Activated naive CD4-positive, alpha-beta T cell treated with anti-CD3 and anti-CD28 coated beads for 36 hours (primary cell): ENCODE measurements at regions of chr14 and their contacts with region 1.

Region 1: DNA sequence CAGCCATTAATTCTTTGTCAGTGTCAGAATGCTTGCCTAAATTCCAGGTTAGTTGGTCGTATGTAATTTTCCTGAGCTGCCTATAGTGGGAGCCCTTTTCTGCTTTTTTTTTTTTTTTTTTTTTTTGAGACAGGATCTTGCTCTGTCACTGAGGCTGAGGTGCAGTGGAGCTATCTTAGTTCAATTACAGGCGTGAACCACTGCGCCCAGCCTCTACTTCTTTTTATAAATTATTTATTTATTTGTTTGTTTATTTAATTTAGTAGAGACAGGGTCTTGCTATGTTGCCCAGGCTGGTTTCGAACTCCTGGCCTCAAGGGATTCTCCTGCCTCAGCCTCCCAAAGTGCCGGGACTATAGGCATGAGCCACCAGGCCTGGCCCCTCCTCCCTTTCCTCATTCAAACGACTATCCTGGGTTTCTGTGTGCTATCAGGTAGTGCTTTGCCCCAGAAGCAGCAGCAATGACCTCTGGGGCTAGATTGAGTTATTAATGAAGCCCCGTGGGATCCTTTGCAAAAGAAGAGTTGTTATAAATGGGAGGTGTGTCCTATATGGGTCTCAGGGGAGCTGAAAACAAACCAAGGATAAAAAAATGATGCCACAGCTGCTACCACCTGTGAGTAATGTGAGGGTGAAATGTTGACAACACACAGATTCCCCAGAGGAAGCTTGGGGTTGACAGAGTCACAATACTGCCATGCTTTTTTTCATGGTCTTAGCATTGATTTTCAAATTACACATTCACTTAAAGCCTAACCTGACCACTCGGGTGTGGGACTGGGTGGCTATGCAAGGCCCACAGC is 34.6 kb upstream of the NFKBIA start:
- DNase-seq: no peak
- H3K4me3 Mint-ChIP-seq: no peak overlapping the region
- H3K27ac Mint-ChIP-seq: no peak overlapping the region
- H3K4me1 Mint-ChIP-seq: peaks cover 9% of the 10 kb centered on the region
- H3K27me3 Mint-ChIP-seq: no peaks in the 10 kb centered on the region

Region 2: GRCh38 chr14:35533357-35534207 is 94.5 kb after region 1 on chr14 and contains the start of gene INSM2:
- CTCF ChIA-PET with region 1: no interaction called
- intact Hi-C with region 1: loop called (anchors 2 kb)
- DNase-seq: peak; percentile 61
- H3K4me3 Mint-ChIP-seq: peak within 1 kb of the TSS; percentile 73
- H3K27ac Mint-ChIP-seq: no peak within 1 kb of the TSS
- H3K4me1 Mint-ChIP-seq: peaks cover 10% of the 10 kb centered on the region
- H3K27me3 Mint-ChIP-seq: peaks cover 61% of the 10 kb centered on the region
- total RNA-seq, gene INSM2: not detected

Region 3: DNA sequence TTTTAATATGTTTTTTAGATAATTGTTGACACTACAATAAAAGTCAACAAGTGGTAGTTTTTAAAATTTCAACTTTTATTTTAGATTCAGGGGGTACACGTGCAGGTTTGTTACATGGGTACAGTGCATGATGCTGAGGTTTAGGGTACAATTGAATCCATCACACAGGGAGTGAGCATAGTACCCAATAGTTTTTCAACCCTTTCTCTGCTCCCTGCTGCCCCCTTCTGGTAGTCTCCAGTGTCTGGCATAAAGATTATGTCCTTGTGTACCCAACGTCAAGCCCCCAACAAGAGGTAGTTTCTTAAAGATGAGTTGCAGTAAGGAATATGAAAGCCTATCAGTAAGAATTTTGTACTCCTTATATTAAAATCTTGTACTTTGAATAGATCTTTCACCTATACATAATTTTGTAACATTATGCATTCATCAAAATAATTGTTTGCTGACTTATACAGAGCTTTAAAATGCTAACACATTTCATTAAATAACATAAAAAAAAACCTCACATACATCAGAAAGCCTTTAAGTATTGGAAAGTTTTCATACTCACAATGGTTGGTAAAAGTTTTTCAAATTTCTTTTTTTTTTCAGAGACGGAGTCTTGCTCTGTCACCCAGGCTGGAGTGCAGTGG is 375.4 kb after region 1 on chr14:
- CTCF ChIA-PET with region 1: interaction called, 27 read pairs
- intact Hi-C with region 1: loop called (anchors 1 kb)
- DNase-seq: peak; percentile 91
- H3K4me3 Mint-ChIP-seq: no peak overlapping the region
- H3K27ac Mint-ChIP-seq: no peak overlapping the region
- H3K4me1 Mint-ChIP-seq: peaks cover 6% of the 10 kb centered on the region
- H3K27me3 Mint-ChIP-seq: no peaks in the 10 kb centered on the region

Region 4: GRCh38 chr14:36059531-36059930 is 620.4 kb after region 1 on chr14:
- CTCF ChIA-PET with region 1: no interaction called
- intact Hi-C with region 1: no loop called
- DNase-seq: no peak
- H3K4me3 Mint-ChIP-seq: no peak overlapping the region
- H3K27ac Mint-ChIP-seq: no peak overlapping the region
- H3K4me1 Mint-ChIP-seq: no peaks in the 10 kb centered on the region
- H3K27me3 Mint-ChIP-seq: peaks cover 5% of the 10 kb centered on the region